ENCODE measurements at regions of chr22 and their contacts with region 1.

Region 1: DNA sequence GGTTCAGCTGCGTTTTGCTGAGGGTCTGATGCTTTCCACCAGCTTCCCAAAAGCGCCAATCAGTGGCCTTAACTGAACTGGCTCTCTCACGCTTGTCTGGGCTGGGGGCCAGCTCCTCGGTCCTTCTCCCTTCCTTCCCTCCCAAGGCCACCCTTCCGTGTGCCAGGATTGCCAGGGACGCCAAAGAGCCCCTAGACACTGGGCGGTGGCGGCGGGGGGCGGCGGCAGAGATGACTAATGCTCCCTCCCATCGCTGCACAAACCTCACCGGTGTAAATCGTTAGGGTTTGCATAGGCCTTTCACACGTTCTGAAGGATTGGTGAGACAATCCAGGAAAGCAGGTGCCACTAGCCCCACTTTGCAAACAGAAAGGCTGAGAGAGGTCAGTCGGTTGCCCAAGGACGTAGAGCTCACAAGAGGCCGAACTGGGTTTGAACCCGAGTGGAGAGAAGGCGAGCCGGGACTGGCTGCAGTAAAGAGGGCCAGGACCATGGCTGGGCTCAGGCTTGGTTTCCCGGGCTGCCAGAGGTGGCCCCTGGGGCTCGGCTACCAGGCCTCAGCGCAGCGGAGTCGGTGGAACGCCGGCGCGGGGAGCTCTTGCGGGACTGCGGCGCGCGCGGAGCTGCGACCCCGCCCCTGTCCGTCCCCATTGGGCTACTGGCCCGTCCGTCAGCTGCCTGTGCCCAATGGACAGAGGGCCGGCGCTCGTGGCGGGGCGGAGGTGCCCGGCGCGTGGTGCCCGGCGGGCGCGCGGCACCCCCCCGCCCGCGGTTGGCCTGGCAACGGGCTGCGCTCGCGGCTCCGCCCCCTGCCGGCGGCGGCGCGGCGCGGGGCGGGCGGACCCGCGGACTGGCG is 589 bp upstream of the GNAZ start:
- DNase-seq: peak; percentile 92 to 97 (median 96)
- H3K4me3 ChIP-seq: peak overlapping the region in 3 of 4 donors; percentile 10 to 56 (median 50)
- H3K27ac ChIP-seq: peak overlapping the region; percentile 7 to 82 (median 70)
- H3K4me1 ChIP-seq: peaks cover 9 to 13% of the 10 kb centered on the region in 2 donors
- H3K27me3 ChIP-seq: no peaks in the 10 kb centered on the region
- CTCF ChIP-seq: no peak
- POLR2A ChIP-seq: peak in 1 of 2 donors; percentile 32

Region 2: GRCh38 chr22:22802339-22802970 is 267.3 kb before region 1 on chr22:
- intact Hi-C with region 1: no loop called
- DNase-seq: no peak
- H3K4me3 ChIP-seq: no peak overlapping the region
- H3K27ac ChIP-seq: no peak overlapping the region
- H3K4me1 ChIP-seq: no peaks in the 10 kb centered on the region
- H3K27me3 ChIP-seq: peaks cover 6% of the 10 kb centered on the region
- CTCF ChIP-seq: peak in 3 of 6 experiments; percentile 8 to 29 (median 12)
- POLR2A ChIP-seq: no peak

Region 3: GRCh38 chr22:22995166-22995565 is 74.6 kb before region 1 on chr22:
- intact Hi-C with region 1: no loop called
- DNase-seq: no peak
- H3K4me3 ChIP-seq: no peak overlapping the region
- H3K27ac ChIP-seq: no peak overlapping the region
- H3K4me1 ChIP-seq: no peaks in the 10 kb centered on the region
- H3K27me3 ChIP-seq: no peaks in the 10 kb centered on the region
- CTCF ChIP-seq: no peak
- POLR2A ChIP-seq: no peak

Region 4: GRCh38 chr22:23012081-23012622 is 57.6 kb before region 1 on chr22:
- intact Hi-C with region 1: loop called in 1 of 2 experiments (anchors 10 kb)
- DNase-seq: no peak
- H3K4me3 ChIP-seq: no peak overlapping the region
- H3K27ac ChIP-seq: no peak overlapping the region
- H3K4me1 ChIP-seq: no peaks in the 10 kb centered on the region
- H3K27me3 ChIP-seq: no peaks in the 10 kb centered on the region
- CTCF ChIP-seq: no peak
- POLR2A ChIP-seq: no peak

Region 5: DNA sequence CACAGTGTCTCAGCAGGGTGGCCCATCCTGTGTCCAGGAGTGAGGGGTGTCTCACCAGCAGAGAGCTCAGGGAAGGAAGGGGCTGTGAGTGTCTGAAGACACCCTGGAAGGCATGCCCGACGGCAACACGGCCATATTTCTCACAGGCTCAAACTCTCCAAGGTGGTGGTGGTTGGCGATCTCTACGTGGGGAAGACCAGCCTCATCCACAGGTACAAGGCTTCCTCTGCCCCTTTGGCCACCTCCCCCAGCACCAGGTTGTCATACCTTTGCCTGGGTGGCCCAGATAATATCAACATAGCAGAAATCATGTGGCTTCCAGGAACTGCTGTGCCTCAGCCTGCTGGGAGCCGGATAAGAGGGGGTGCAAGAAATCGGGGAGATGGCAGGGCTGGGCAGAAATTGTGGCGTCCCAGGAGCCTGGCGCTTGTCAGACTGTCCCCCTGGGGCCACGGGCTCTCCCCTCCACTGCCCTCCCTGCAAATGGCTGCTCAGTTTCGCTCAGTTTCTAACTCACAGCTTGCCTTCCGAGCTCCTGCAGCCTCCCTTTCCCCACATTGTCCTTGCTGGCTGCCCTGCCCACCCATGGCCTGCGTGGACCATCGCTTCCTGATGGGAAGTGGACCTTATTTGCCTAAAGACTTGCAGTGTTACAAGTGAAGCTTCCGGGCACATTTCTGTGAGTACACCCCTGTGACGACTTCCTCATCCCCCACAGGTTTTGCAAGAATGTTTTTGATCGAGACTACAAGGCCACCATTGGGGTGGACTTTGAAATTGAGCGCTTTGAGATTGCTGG is 82.8 kb after region 1 on chr22:
- intact Hi-C with region 1: loop called in 1 of 2 experiments (anchors 10 kb)
- DNase-seq: no peak
- H3K4me3 ChIP-seq: no peak overlapping the region
- H3K27ac ChIP-seq: no peak overlapping the region
- H3K4me1 ChIP-seq: no peaks in the 10 kb centered on the region
- H3K27me3 ChIP-seq: no peaks in the 10 kb centered on the region
- CTCF ChIP-seq: no peak
- POLR2A ChIP-seq: no peak

Measured in adrenal gland (tissue), 19 donors.